ENCODE measurements at regions of chr11 and their contacts with region 1.

Region 1: DNA sequence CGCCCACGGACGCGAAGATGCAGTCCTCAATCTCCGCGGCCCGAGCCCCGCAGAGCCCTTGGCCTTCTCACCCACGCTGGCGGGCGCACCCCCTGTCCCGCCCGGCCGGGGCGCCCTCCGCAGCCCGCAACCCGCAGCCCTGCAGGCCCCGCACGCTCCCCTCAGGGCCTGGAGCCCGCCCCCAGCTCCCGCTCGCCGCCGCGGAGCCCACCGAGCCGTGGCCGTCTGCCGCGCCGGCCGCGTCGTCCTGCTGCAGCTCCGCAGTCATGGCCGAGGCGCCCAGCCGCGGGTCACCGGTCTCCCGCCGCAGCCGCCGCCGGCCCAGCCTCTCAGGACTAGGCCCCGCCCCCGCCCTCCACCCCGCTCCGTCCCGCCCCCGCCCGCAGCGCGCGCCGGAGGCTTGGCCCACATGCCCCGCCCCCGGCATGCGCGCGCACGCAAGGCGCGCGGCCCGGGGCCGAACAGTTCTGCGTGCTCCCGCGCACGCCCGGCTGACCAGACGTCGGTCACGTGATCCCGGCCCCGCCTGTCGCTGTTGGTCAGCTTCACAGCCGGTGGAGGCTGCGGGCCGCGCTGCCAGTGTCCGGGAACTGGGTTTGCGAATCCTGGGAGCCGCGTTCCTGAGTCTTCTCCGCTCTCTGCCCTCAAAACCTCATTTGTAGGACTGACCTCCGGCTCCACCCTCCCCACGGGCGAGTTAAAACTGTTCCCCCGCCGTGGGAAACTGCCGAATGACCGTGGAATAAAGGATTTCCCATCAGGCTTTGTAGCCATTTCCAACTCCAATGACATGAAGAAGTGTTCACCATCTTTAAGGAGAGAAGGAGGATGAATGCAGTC is at the start of gene USP28:
- DNase-seq: peak; percentile 94
- H3K4me3 Mint-ChIP-seq: peak within 1 kb of the TSS; percentile 80
- H3K27ac Mint-ChIP-seq: peak within 1 kb of the TSS; percentile 92
- H3K4me1 Mint-ChIP-seq: peaks cover 20% of the 10 kb centered on the region
- H3K27me3 Mint-ChIP-seq: no peaks in the 10 kb centered on the region
- CTCF ChIP-seq: no peak
- total RNA-seq, gene USP28: 15.8 and 17.2 TPM in 2 replicates

Region 2: GRCh38 chr11:113859665-113860064 is 15.8 kb before region 1 on chr11:
- CTCF ChIA-PET with region 1: interaction called, 3 read pairs
- POLR2A ChIA-PET with region 1: interaction called, 16 read pairs
- intact Hi-C with region 1: no loop called
- DNase-seq: peak; percentile 57
- H3K4me3 Mint-ChIP-seq: no peak overlapping the region
- H3K27ac Mint-ChIP-seq: no peak overlapping the region
- H3K4me1 Mint-ChIP-seq: peaks cover 13% of the 10 kb centered on the region
- H3K27me3 Mint-ChIP-seq: no peaks in the 10 kb centered on the region
- CTCF ChIP-seq: no peak